ENCODE measurements at regions of chr3 and their contacts with region 1.

Region 1: GRCh38 chr3:52851348-52851747 is 16.5 kb upstream of the MUSTN1 start:
- ATAC-seq: peak; percentile 26 to 98 (median 57)
- H3K4me3 ChIP-seq: no peak overlapping the region
- H3K27ac ChIP-seq: no peak overlapping the region
- H3K4me1 ChIP-seq: peaks cover 0 to 3% of the 10 kb centered on the region in 2 donors

Region 2: DNA sequence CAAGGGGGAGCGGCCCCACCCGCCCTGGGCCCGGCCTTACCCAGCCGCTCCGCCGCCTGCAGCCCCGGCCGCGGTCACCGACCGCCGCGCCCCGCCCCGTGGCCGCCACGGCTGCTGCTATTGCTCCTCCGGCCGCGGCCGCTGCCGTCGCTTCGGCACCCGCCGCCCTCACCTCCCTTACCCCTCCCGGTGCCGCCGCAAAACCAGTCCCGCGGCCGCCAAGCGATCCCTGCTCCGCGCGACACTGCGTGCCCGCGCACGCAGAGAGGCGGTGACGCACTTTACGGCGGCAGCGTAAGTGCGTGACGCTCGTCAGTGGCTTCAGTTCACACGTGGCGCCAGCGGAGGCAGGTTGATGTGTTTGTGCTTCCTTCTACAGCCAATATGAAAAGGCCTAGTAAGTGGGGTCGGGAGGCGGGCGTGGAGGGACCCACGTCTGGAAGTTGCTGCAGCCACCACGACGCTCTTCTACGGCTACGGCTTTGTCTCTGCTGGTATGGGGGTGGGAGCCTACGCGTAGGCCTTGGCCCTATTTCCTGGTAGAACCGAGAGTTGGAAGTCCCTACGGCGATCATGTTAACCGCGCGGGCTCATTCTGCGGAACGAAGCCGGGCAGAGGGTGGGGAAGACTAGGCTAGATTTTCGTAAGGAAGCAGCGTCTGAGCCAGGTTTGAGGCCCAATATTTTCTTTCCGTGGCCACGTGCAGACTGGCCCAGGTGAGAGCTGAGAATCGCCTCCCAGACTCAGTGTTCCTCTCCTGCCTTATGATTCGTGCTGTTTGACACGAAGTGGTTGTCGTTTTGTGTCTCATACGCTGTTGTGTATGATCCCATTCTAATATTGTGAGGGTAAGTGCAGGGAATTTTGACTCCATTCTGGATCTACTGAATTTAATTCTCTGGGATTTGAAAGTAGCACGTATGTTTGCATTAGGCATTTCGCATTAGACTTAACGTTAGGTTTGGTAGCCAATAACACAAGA is 165.3 kb before region 1 on chr3 and contains the starts of genes GNL3 and PBRM1:
- in situ Hi-C with region 1: no loop called
- ATAC-seq: peak; percentile 74 to 92 (median 87)
- H3K4me3 ChIP-seq: peak within 1 kb of the TSS; percentile 56 to 94 (median 77)
- H3K27ac ChIP-seq: peak within 1 kb of the TSS; percentile 99
- H3K4me1 ChIP-seq: peaks cover 12 to 17% of the 10 kb centered on the region in 2 donors
- total RNA-seq, gene GNL3: 75.6 to 219 (median 110) TPM
- total RNA-seq, gene PBRM1: 27.2 to 100 (median 66.9) TPM

Region 3: DNA sequence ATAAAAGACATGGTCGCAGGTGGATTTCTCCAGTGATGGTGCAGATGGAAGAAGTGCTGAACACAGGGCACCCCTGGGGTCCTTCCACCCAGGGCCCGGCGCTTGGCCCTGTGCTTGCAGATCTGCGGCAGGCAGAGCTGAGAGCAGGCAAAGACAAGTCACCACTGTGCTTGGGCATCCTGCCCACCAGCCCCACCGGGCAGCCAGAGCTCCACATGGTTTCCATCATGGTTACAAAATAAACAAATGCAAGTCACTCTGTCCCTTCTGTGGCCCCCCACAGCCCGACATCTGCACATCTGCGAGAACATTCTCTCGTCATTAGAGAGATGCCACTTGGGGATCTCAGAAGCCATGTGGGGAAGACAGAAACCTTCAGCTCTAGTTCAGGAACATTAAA is 232.2 kb after region 1 on chr3:
- in situ Hi-C with region 1: loop called in 1 of 9 experiments (anchors 25 kb)
- ATAC-seq: peak in 3 of 8 experiments; percentile 48 to 50 (median 49)
- H3K4me3 ChIP-seq: no peak overlapping the region
- H3K27ac ChIP-seq: no peak overlapping the region
- H3K4me1 ChIP-seq: peaks cover 9 to 11% of the 10 kb centered on the region in 2 donors